PC-9 (cell line): ENCODE measurements at regions of chr6 and their contacts with region 1.

Region 1: DNA sequence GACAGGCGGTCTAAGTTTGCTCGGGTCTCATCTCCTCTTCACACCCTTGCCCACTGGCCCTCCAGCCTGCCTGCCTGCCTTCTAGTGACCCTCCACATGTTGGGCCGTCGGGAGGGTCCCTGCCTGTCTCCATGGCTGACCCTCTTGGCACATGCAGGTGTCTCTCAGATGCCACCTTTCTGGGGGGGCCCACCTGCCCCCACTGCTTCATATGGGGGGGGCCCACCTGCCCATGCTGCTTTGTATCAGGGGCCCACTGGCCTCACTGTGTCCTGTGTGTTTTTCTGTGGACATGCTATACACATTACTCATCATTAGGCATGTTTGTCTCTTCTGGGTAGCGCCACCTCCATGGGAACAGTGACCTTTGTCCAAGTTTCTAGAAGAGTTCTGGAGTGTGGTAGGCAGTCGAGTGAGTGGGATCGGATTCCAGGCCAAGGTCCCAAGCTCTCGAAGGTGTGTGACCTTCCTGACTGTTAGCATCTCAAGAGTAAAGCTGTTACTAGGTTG is 40.4 kb upstream of the KIF25 start:
- DNase-seq: peak in 1 of 2 experiments; percentile 36
- H3K4me3 ChIP-seq: no peak overlapping the region
- H3K27ac ChIP-seq: peak overlapping the region; percentile 67
- H3K4me1 ChIP-seq: peaks cover 16% of the 10 kb centered on the region; the same call in 1 of the 2 replicates
- H3K27me3 ChIP-seq: no peaks in the 10 kb centered on the region
- CTCF ChIP-seq: no peak

Region 2: GRCh38 chr6:167987396-167988153 is 30.5 kb after region 1 on chr6:
- CTCF ChIA-PET with region 1: no interaction called
- POLR2A ChIA-PET with region 1: interaction called, 11 read pairs
- intact Hi-C with region 1: no loop called
- DNase-seq: no peak
- H3K4me3 ChIP-seq: no peak overlapping the region
- H3K27ac ChIP-seq: no peak overlapping the region
- H3K4me1 ChIP-seq: no peaks in the 10 kb centered on the region
- H3K27me3 ChIP-seq: peaks cover 58% of the 10 kb centered on the region
- CTCF ChIP-seq: no peak